Transverse colon (tissue), 4 donors: ENCODE measurements at regions of chr3 and their contacts with region 1.

Region 1: DNA sequence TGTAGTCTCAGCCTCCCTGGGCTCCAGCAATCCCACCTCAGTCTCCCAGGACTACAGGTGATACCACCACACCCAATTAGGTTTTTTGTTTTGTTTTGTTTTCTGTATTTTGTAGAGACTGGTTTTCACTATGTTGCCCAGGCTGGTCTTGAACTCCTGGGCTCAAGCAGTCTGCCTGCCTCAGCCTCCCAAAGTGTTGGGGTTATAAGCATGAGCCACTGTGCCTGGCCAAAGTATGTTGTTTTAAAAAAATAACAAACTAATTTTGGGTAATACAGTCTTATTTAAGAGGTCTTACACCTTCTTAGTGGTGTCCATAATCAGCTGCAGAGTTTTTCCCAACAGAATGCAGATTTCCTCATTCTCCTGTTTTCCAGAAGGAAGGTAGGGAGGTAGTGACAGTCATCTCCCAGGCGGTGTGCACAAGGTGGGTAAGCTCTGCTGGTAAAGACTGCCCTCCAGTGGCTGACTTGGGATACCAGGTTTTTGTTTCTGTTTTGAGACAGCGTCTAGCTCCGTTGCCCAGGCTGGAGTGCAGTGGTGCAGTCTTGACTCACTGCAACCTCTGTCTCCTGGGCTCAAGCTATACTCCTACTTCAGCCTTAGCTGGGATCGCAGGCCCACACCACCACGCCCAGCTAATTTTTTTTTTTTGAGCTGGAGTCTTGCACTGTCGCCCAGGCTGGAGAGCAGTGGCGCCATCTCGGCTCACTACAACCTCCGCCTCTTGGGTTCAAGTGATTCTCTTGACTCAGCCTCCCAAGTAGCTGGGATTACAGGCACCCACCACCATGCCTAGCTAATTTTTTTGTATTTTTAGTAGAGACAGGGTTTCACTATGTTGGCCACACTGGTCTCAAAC is 58.4 kb downstream of the MAP6D1 start:
- DNase-seq: peak; percentile 83
- H3K4me3 ChIP-seq: no peak overlapping the region
- H3K27ac ChIP-seq: no peak overlapping the region
- H3K4me1 ChIP-seq: peaks cover 0 to 12% (median 0%) of the 10 kb centered on the region in 4 donors
- H3K27me3 ChIP-seq: no peaks in the 10 kb centered on the region
- CTCF ChIP-seq: peak; percentile 76 to 85 (median 82)
- EP300 ChIP-seq: no peak
- POLR2A ChIP-seq: no peak

Region 2: DNA sequence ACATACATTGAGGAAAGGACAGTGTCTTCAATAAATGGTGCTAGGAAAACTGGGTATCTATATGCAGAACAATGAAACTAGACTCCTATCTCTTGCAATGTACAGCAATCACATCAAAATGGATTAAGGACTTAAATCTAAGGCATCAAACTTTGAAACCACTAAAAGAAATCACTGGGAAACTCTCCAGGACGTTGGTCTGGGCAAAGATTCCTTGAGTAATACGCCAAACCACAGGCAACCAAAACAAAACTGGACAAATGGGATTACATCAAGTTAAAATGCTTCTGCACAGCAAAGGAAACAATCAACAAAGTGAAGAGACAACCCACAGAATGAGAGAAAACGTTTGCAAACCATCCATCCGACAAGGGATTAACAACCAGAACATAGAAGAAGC is 618.9 kb before region 1 on chr3:
- in situ Hi-C with region 1: loop called in 1 of 4 experiments (anchors 25 kb)
- intact Hi-C with region 1: no loop called
- DNase-seq: no peak
- H3K4me3 ChIP-seq: no peak overlapping the region
- H3K27ac ChIP-seq: no peak overlapping the region
- H3K4me1 ChIP-seq: no peaks in the 10 kb centered on the region
- H3K27me3 ChIP-seq: no peaks in the 10 kb centered on the region
- CTCF ChIP-seq: no peak
- EP300 ChIP-seq: no peak
- POLR2A ChIP-seq: no peak

Region 3: GRCh38 chr3:183460081-183461055 is 306.6 kb before region 1 on chr3:
- in situ Hi-C with region 1: loop called (anchors 5 to 10 kb)
- intact Hi-C with region 1: no loop called
- DNase-seq: no peak
- H3K4me3 ChIP-seq: no peak overlapping the region
- H3K27ac ChIP-seq: no peak overlapping the region
- H3K4me1 ChIP-seq: no peaks in the 10 kb centered on the region
- H3K27me3 ChIP-seq: no peaks in the 10 kb centered on the region
- CTCF ChIP-seq: no peak
- EP300 ChIP-seq: no peak
- POLR2A ChIP-seq: no peak

Region 4: DNA sequence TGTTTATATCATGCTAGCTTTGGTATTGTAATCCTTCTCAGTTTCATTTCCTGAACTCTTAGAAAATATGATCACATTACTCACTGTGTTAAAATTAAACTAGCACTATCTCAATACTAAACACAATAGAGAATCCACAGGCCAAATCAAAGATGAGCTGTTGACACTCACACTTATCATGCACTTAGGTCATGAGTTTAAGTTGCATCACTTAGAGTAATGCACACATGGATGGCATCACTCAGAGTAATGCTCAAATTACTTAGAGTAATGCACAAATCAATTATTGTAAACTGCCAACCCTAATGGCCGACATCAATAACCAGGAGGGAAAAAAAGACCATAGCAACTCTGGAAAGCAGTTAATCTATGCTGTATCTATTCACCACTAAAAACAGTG is 298.6 kb before region 1 on chr3:
- in situ Hi-C with region 1: loop called (anchors 5 to 10 kb)
- intact Hi-C with region 1: loop called (anchors 5 kb)
- DNase-seq: no peak
- H3K4me3 ChIP-seq: no peak overlapping the region
- H3K27ac ChIP-seq: no peak overlapping the region
- H3K4me1 ChIP-seq: peaks cover 0 to 9% (median 4%) of the 10 kb centered on the region in 4 donors
- H3K27me3 ChIP-seq: no peaks in the 10 kb centered on the region
- CTCF ChIP-seq: no peak
- EP300 ChIP-seq: no peak
- POLR2A ChIP-seq: no peak

Region 5: DNA sequence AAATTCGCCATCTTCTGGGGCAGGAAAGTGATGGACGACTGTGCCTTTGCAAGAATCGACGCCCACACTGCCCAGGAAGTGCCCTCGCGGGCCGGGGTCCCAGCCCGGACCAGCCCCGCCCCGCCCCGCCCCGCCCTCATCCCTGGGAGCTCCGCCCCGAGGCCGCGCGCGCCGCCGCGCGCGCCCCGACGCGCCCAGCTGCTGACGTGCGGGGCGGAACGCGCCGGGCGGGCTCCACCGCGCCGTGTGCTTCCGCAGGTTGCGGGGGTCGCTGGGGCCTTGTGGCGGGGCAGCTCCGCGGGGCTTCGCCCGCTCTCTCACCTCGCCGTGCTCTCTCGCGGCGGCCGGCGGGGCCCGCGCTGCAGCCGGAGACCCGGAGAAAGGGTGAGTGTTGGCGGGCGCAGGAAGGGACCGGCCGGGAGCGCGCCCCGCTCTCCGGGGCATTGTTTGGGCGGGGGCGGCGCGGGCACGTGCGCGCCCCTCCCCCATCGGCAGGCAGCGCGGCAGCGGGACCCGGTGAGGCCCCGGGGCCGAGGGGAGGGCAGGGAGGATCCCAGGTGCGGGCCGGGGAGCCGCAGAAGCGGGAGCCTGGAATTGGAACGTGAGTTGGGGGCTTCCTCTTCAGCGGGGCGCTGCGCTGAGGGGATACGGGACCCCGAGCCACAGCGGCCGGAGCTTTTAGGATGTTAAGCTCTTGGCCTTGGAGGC is 69.2 kb before region 1 on chr3 and contains the start of gene YEATS2:
- in situ Hi-C with region 1: no loop called
- intact Hi-C with region 1: loop called (anchors 10 kb)
- DNase-seq: peak; percentile 69
- H3K4me3 ChIP-seq: peak within 1 kb of the TSS; percentile 69 to 92 (median 87)
- H3K27ac ChIP-seq: peak within 1 kb of the TSS; percentile 86 to 92 (median 91)
- H3K4me1 ChIP-seq: peaks cover 11 to 23% (median 14%) of the 10 kb centered on the region in 4 donors
- H3K27me3 ChIP-seq: no peaks in the 10 kb centered on the region
- CTCF ChIP-seq: no peak
- EP300 ChIP-seq: no peak
- POLR2A ChIP-seq: peak; percentile 29
- total RNA-seq, gene YEATS2: 10.1 to 23.2 (median 16.1) TPM